ENCODE measurements at regions of chr20 and their contacts with region 1.

Region 1: DNA sequence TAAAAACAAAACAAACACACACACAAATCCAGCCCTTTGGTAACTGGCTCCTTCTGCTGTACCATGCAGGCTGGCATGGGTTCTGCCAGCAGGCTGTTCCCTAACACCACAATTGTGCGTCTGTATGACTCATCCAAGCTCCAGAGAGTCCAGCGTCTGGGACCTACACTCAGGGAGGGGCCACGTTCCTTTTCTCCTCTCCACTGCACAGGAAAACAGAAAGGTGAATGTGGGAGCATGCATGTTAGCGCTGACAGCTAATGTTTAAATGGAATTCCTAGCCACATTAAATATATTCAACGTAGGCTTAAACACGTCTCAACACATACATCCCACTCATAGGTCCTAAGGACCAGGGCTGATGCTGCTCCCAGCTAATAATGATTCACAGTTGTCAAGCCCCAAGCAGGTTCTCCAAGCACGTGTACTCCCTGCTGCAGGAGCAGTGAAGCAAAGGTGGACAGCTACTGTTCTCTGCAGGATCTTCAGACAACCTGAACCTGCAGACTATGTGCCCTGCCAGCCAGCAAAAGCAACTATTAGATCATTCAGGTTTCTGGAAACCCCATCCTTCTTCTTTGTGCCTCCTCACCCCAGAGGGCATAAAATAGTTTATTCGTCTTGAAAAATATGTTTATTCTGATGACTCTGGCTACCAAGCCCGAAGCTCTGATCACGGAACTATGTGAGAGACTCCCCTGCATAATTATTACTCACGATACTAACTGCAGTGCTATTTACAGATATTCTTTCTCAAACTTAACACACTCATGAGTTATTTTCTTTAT is 20.9 kb downstream of the MAP1LC3A start:
- DNase-seq: peak; percentile 68
- ATAC-seq: peak; percentile 89 to 91

Region 2: GRCh38 chr20:34704177-34705007 is 125.0 kb after region 1 on chr20 and contains the start of gene TP53INP2:
- intact Hi-C with region 1: loop called in 1 of 2 experiments (anchors 10 kb)
- DNase-seq: peak; percentile 96
- ATAC-seq: peak; percentile 81 to 86
- total RNA-seq, gene TP53INP2: 85.0 to 117 TPM

Region 3: GRCh38 chr20:34753706-34754461 is 174.5 kb after region 1 on chr20:
- intact Hi-C with region 1: loop called in 1 of 2 experiments (anchors 10 kb)
- DNase-seq: no peak
- ATAC-seq: no peak

Region 4: GRCh38 chr20:34771680-34772081 is 192.3 kb after region 1 on chr20:
- intact Hi-C with region 1: loop called in 1 of 2 experiments (anchors 5 kb)
- DNase-seq: no peak
- ATAC-seq: no peak